ENCODE measurements at regions of chr7 and their contacts with region 1.

Region 1: GRCh38 chr7:117458977-117459583 is 20.7 kb upstream of the CFTR start:
- DNase-seq: no peak
- ATAC-seq: no peak
- H3K4me3 ChIP-seq: no peak overlapping the region
- H3K27ac ChIP-seq: no peak overlapping the region
- H3K4me1 ChIP-seq: no peaks in the 10 kb centered on the region
- H3K27me3 ChIP-seq: peaks cover 0 to 5% (median 0%) of the 10 kb centered on the region in 7 donors
- CTCF ChIP-seq: peak; percentile 28 to 70 (median 60)

Region 2: DNA sequence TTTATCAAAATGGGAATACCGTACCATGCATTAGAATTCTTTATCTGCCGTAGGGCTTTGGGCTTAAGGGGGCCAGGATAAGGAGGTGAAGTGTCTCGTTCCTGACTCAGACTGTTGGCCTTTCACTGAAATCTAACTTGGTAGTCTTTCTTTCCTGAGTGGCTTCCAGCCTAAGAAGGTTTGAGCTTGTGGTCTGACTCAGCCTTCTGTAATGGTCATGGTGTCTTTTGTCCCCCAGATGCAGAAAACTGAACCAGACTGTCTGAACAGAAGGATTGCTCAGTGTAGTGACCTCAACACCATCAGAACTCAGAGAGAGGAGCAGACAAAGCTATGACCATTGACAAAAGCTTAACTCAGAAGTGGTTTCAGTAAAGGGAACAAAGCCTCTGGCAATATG is 175.7 kb before region 1 on chr7:
- intact Hi-C with region 1: no loop called
- DNase-seq: no peak
- ATAC-seq: no peak
- H3K4me3 ChIP-seq: no peak overlapping the region
- H3K27ac ChIP-seq: no peak overlapping the region
- H3K4me1 ChIP-seq: no peaks in the 10 kb centered on the region
- H3K27me3 ChIP-seq: no peaks in the 10 kb centered on the region
- CTCF ChIP-seq: no peak

Region 3: DNA sequence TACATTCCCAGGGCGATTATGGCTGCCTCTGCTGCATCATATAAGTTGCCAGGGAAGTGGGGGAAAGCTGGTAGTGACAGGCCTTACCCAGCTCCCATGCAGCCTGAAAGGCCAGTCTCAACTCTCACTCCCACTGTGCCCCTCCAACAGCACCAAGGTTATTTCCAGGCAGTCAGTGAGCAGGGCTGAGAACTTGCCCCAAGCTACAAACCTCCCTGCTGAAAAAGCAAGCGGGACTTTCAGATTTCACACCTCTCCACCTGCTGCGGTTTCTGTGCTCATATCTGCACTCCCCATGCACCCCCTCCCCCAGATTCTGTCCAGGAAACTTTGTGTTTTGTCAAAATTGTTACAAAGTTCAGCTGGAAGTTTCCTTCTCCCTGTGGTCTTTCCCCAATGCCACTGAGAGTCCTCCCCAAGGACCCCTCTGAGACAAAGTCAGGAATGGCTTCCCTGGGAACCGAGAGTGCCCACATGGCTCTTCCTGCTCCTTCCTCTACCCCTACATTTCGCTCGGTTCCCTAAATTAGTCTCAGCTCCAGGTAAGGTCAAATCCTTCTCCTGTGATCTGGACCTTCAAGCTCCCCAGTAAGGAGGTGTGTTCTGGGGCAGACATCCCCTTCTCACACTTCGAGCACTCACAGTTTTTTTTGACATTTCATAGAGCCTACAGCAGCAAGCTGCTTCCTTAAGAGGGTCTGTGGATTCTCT is 111.0 kb before region 1 on chr7:
- intact Hi-C with region 1: no loop called
- DNase-seq: no peak
- ATAC-seq: no peak
- H3K4me3 ChIP-seq: no peak overlapping the region
- H3K27ac ChIP-seq: no peak overlapping the region
- H3K4me1 ChIP-seq: no peaks in the 10 kb centered on the region
- H3K27me3 ChIP-seq: peaks cover 0 to 41% (median 8%) of the 10 kb centered on the region in 7 donors
- CTCF ChIP-seq: no peak

Region 4: DNA sequence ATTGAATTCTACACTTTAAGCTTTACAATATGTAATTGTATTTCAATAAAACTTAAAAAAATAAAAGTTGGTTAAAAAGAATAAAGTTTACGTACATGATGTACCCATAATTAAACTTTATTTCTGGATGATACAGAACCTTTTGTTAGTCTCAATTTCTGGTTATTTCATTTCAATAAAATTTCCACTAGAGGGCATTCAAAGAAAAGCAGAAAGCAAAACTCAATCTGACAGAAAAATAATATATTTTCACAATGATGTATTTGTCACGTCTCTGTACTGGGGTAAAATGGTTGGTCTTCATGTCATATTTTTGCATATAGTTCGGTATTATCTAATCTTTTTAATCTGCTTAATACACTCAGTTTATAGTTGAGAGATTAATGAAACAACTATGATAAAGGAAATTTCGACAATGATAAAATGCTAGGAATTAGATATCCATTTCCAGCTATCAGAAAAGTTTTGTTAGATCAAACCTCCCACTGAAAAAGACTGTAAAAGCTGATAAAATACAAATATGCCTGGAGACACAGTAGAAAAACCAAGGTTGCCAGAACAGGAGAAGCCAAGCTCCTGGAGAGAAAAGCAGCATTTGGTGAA is 59.2 kb before region 1 on chr7:
- intact Hi-C with region 1: no loop called
- DNase-seq: no peak
- ATAC-seq: no peak
- H3K4me3 ChIP-seq: no peak overlapping the region
- H3K27ac ChIP-seq: no peak overlapping the region
- H3K4me1 ChIP-seq: no peaks in the 10 kb centered on the region
- H3K27me3 ChIP-seq: no peaks in the 10 kb centered on the region
- CTCF ChIP-seq: peak in 7 of 9 donors; percentile 32 to 53 (median 40)

Region 5: GRCh38 chr7:117509648-117510047 is 50.6 kb after region 1 on chr7:
- intact Hi-C with region 1: loop called in 1 of 10 experiments (anchors 10 kb)
- DNase-seq: no peak
- ATAC-seq: no peak
- H3K4me3 ChIP-seq: no peak overlapping the region
- H3K27ac ChIP-seq: no peak overlapping the region
- H3K4me1 ChIP-seq: no peaks in the 10 kb centered on the region
- H3K27me3 ChIP-seq: no peaks in the 10 kb centered on the region
- CTCF ChIP-seq: no peak

Region 6: DNA sequence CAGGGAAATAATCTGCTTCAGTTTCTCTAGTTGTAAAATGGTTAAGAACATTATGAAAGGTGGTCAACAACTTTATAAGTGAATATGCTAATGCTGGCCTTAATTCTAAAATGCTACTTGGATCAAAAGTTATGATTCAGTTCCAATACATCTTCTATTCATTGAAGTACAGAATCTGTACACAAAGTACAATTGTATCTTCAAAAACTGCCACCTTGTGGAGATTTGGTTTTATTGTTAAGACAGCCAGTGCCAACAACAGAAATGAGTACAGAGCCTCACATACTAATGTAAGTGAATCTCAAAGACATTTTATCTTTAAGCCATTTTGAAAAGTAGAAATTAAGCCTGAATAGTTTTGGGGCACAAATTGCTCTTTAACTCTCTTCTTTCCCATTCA is 214.8 kb after region 1 on chr7:
- intact Hi-C with region 1: loop called in 3 of 10 experiments (anchors 5 kb)
- DNase-seq: no peak
- ATAC-seq: peak in 1 of 8 donors; percentile 44
- H3K4me3 ChIP-seq: no peak overlapping the region
- H3K27ac ChIP-seq: no peak overlapping the region
- H3K4me1 ChIP-seq: peaks cover 0 to 6% (median 0%) of the 10 kb centered on the region in 9 donors
- H3K27me3 ChIP-seq: peaks cover 0 to 5% (median 0%) of the 10 kb centered on the region in 7 donors
- CTCF ChIP-seq: peak in 4 of 9 donors; percentile 26 to 39 (median 32)

Region 7: GRCh38 chr7:117715784-117716445 is 256.8 kb after region 1 on chr7:
- intact Hi-C with region 1: loop called in 9 of 10 experiments (anchors 5 to 10 kb)
- DNase-seq: no peak
- ATAC-seq: peak in 1 of 8 donors; percentile 67
- H3K4me3 ChIP-seq: no peak overlapping the region
- H3K27ac ChIP-seq: no peak overlapping the region
- H3K4me1 ChIP-seq: no peaks in the 10 kb centered on the region
- H3K27me3 ChIP-seq: no peaks in the 10 kb centered on the region
- CTCF ChIP-seq: peak in 8 of 9 donors; percentile 8 to 52 (median 48)

Region 8: GRCh38 chr7:118153551-118154177 is 694.6 kb after region 1 on chr7:
- intact Hi-C with region 1: loop called in 1 of 10 experiments (anchors 10 kb)
- DNase-seq: no peak
- ATAC-seq: peak in 1 of 8 donors; percentile 33
- H3K4me3 ChIP-seq: no peak overlapping the region
- H3K27ac ChIP-seq: no peak overlapping the region
- H3K4me1 ChIP-seq: peaks cover 0 to 6% (median 0%) of the 10 kb centered on the region in 9 donors
- H3K27me3 ChIP-seq: no peaks in the 10 kb centered on the region
- CTCF ChIP-seq: peak; percentile 35 to 75 (median 65)